ENCODE measurements at regions of chr7 and their contacts with region 1.

Region 1: DNA sequence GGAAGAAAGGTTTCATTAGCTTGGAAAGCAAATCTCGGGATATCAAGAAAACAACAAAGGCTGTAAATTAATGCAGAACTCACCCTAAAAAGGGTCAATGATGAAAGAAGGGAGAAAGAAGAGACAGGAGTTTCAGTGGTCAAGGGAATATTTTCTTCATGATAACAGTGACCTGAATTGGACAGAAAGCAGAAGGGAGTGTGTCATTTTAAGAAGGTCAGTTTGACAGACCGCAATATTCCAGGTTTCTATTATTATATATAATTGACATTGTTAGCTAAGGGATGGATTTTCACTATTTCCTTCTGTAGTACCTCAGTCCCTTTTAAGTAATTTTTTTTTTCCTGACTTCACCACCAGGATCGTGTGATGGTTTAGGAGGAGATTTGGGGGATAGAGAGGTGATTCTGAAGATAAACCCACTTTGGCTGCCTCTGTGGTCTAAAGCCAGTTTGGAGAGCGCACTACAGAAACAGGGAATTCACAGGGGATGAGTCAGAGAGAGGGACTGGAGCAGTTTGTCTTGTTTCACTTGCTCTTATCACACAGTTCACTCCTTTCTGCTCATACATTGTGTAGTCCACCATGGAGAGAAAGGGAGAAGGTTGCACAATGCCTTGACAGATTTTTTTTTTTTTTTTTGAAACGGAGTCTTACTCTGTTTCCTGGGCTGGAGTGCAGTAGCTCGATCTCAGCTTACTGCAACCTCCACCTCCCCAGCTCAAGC is 417.9 kb downstream of the AUTS2 start:
- DNase-seq: no peak
- ATAC-seq: peak; percentile 91
- H3K4me3 ChIP-seq: no peak overlapping the region
- H3K27ac ChIP-seq: no peak overlapping the region
- H3K4me1 ChIP-seq: no peaks in the 10 kb centered on the region
- H3K27me3 ChIP-seq: no peaks in the 10 kb centered on the region

Region 2: DNA sequence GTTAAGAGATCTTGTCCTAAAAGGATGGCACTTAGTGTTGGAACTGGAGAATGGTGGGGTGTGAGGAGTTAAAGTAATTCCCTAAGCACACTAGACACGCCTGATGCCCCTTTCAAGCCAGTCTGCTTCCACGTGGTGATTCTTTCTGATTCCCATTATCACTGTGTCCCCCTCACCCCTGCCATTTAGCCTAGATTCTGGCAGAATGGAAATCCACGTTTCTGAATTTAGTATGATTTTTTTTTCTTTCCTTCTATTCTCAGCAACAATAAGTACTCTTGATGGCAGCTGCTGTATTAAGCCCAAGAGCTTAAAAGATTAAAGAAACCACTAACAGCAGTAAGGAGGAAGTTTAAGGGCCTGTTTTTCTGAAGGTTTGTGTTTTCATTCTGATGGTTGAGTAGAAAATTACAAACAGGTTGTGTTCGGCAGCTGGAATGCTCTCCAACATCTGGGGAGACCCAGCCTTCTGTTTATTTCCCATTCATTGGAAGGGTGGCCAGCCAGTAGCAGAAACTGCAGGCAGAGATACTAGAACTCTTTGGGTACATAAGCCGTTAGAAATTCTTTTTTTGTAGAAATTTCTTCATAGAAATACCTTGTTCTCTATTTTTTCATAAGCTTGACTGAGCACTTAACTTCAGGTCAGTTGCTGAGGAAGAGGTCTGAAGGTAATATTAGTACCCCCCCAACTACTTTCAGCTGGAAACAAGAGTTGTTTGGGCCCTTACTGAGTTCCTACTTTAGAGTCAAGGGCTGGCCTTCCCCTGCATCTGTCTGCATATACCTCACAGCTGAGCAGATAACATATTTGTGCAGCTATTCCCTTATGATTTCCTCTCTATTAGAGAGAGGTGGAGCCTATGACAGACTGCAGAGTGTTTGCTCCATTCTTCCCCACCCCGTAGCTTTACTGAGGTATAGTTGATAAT is 62.8 kb before region 1 on chr7:
- intact Hi-C with region 1: loop called in 1 of 4 experiments (anchors 10 kb)
- DNase-seq: no peak
- ATAC-seq: peak in 1 of 2 donors; percentile 15
- H3K4me3 ChIP-seq: no peak overlapping the region
- H3K27ac ChIP-seq: no peak overlapping the region
- H3K4me1 ChIP-seq: peaks cover 4% of the 10 kb centered on the region
- H3K27me3 ChIP-seq: no peaks in the 10 kb centered on the region